ENCODE measurements at regions of chr3 and their contacts with region 1.

Region 1: DNA sequence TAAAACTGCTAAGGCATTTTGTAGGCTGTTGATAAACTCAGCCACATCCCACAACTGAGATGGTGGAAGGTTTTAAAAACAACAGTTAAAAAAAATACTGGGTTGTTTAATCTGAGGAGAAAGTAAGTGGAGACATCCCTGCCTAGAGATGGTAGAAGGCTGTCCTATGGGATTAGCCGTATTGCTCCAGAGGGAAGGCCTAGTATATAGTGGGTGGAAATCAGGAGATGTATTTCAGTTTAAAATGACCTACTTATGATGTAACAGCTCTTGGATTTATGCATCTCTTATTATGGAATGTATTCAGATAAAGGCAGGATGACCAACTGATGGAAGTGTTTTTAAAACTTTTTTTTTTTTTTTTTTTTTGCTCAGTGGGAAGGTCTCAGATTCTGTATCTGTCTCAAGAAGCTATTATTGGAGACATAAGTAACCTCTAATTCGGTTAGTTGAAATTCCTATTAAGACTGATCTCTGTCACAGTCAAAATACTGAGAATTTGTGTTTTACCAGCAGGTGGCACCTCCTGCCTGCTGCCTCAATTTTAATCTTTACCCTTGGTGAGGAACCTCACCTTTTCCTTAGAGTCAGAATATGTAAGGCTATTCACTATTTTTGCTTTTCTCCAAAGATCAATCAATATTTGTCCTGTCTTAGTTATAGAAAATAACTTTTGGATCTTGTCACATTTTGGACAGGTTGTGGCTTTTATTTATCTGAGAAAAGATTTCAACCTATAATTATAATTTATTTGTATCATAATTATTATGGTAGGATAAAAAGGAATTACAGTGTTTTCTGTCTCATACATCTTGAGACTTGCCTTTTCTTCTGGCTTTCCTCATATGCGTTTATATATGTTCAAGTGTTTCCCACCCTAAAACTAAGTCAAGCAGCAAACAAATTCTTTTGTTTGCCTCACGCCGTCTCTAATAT is 63.0 kb downstream of the VPS8 start:
- DNase-seq: no peak
- H3K4me3 ChIP-seq: no peak overlapping the region
- H3K27ac ChIP-seq: no peak overlapping the region
- H3K4me1 ChIP-seq: no peaks in the 10 kb centered on the region
- H3K27me3 ChIP-seq: no peaks in the 10 kb centered on the region
- CTCF ChIP-seq: peak in 3 of 4 experiments; percentile 37 to 61 (median 61)
- POLR2A ChIP-seq: no peak

Region 2: DNA sequence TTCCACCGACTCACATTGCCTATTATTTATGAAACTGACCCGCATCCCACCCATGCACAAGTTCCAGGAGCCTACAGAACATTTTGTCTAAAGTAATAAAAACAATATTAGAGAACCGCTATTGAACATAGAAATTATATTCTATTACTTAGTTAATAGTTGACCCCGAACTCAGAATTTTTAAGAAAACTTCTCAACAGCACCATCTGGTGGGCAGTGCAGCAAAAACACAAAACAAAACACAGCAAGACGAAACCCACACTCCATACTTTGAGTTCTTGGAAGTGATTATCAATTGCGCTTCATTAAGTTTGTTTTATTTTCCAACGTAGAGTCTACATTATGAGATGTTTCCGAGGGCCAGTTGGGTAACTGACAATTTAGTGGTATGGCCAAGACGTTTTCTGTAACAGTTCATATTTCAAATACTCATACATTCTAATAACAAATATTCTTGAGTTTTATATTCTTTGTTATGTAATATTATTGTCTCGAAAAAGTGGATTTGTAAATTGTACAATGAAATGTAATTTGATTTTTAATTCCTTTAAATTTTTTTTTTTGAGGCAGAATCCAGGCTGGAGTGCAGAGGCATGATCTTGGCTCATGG is 301.9 kb after region 1 on chr3:
- intact Hi-C with region 1: loop called (anchors 2 kb)
- DNase-seq: no peak
- H3K4me3 ChIP-seq: no peak overlapping the region
- H3K27ac ChIP-seq: no peak overlapping the region
- H3K4me1 ChIP-seq: no peaks in the 10 kb centered on the region
- H3K27me3 ChIP-seq: no peaks in the 10 kb centered on the region
- CTCF ChIP-seq: peak; percentile 35 to 71 (median 58)
- POLR2A ChIP-seq: no peak